Mammary epithelial cell (primary cell): ENCODE measurements at regions of chr17 and their contacts with region 1.

Region 1: DNA sequence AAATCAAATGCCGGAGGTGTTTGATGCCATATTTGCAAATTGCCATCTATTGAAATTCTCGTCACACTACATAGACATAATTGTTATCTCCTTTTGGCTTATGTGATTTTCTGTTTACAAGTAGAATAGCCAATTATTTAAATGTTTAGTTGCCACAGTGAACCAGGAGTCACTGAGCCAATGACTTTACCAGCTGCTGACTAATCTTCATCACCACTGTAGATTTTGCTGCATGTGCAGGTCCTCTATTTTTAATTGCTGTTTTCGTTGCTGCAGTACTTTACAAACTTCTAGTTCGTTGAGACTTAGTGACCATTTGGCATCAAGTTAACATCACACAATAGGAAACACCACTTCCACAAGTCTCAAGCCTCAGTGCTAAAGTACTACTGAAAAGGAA is 22.8 kb downstream of the ABHD15 start:
- DNase-seq: no peak
- H3K4me3 ChIP-seq: no peak overlapping the region
- H3K27ac ChIP-seq: no peak overlapping the region
- H3K4me1 ChIP-seq: no peaks in the 10 kb centered on the region
- H3K27me3 ChIP-seq: no peaks in the 10 kb centered on the region
- CTCF ChIP-seq: no peak

Region 2: DNA sequence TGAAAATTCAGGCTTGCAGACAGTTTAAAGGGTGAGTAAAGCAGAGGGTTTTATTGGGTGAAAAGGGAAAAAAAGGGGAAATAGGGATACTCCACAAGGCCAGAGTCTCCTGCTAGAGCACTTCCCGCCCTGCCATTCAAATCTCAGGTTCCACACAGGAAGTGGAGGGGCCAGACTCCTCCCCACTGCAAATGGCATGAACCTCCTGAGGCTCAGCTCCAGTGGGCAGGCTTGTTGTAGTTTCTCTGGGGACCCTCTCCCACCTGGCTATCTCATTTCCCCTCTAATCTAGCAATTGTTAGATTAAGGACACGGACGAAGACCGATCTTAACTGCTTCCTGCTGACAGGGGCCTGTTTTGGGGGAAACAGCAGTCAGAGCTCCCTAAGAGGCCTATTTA is 110.5 kb before region 1 on chr17:
- CTCF ChIA-PET with region 1: no interaction called
- dilution Hi-C with region 1: loop called (anchors 5 kb)
- in situ Hi-C with region 1: no loop called
- intact Hi-C with region 1: no loop called
- DNase-seq: no peak
- H3K4me3 ChIP-seq: no peak overlapping the region
- H3K27ac ChIP-seq: no peak overlapping the region
- H3K4me1 ChIP-seq: no peaks in the 10 kb centered on the region
- H3K27me3 ChIP-seq: no peaks in the 10 kb centered on the region
- CTCF ChIP-seq: no peak

Region 3: DNA sequence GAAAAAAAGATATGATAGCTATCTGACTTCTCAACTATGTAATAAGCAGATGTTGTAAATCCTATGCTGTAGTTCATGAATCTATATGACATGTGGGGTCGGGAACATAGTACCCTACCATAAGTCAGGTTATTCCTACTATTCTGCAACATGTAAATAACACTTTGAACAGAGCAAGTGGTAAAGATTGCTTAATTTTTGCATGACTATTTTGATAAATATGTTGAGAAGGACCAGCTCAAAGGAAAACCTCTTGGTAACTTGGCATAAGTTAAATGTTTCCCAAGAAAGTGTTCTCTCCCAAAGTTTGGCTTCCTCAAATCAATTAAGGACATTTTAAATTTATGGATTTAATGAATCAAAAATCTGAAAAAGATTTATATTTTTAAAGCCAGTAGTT is 39.4 kb before region 1 on chr17:
- CTCF ChIA-PET with region 1: no interaction called
- dilution Hi-C with region 1: no loop called
- in situ Hi-C with region 1: no loop called
- intact Hi-C with region 1: no loop called
- DNase-seq: no peak
- H3K4me3 ChIP-seq: no peak overlapping the region
- H3K27ac ChIP-seq: no peak overlapping the region
- H3K4me1 ChIP-seq: no peaks in the 10 kb centered on the region
- H3K27me3 ChIP-seq: no peaks in the 10 kb centered on the region
- CTCF ChIP-seq: no peak

Region 4: GRCh38 chr17:29699283-29699682 is 155.2 kb after region 1 on chr17:
- CTCF ChIA-PET with region 1: no interaction called
- dilution Hi-C with region 1: no loop called
- in situ Hi-C with region 1: no loop called
- intact Hi-C with region 1: no loop called
- DNase-seq: no peak
- H3K4me3 ChIP-seq: no peak overlapping the region
- H3K27ac ChIP-seq: no peak overlapping the region
- H3K4me1 ChIP-seq: no peaks in the 10 kb centered on the region
- H3K27me3 ChIP-seq: no peaks in the 10 kb centered on the region
- CTCF ChIP-seq: no peak